ENCODE measurements at regions of chr17 and their contacts with region 1.

Region 1: GRCh38 chr17:42067351-42068091 is 17.1 kb upstream of the C17orf113 start:
- DNase-seq: peak; percentile 73
- CTCF ChIP-seq: peak; percentile 93

Region 2: DNA sequence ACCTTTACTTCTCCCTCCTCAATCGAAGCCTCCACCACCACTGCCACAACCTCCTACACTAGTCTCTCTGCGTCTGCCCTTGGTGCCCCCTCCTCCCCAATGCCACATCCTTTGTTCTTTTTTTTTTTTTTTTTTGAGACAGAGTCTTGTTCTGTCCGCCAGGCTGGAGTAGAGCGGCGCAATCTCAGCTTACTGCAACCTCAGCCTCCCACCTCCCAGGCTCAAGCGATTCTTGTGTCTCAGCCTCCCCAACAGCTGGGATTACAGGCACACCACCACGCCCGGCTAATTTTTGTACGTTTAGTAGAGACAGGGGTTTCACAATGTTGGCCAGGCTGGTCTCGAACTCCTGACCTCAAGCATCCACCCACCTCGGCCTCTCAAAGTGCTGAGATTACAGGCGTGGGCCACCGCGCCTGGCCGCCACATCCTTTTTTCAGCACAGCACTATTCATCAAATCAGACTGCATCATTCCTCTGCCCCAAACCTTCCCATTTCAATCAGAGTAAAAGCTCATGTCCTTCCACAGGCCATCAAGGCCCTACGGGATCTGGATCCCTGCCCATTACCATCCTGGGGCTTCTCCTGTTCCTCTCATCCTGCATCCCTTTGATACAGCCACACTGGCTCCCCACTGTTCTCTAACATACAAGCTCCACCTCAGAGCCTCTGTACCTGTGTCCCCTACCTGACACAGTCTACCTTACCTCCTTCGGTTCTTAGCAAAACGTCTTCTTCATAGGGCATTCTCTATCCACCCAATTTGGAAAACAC is 204.3 kb before region 1 on chr17:
- CTCF ChIA-PET with region 1: no interaction called
- POLR2A ChIA-PET with region 1: no interaction called
- DNase-seq: no peak
- CTCF ChIP-seq: no peak

Region 3: GRCh38 chr17:42019509-42020404 is 47.8 kb before region 1 on chr17 and contains the start of gene NKIRAS2:
- CTCF ChIA-PET with region 1: interaction called, 44 read pairs
- POLR2A ChIA-PET with region 1: no interaction called
- DNase-seq: peak; percentile 94
- CTCF ChIP-seq: peak; percentile 96

Region 4: GRCh38 chr17:42039794-42040763 is 27.4 kb before region 1 on chr17:
- CTCF ChIA-PET with region 1: interaction called, 16 read pairs
- POLR2A ChIA-PET with region 1: no interaction called
- DNase-seq: no peak
- CTCF ChIP-seq: no peak

Region 5: DNA sequence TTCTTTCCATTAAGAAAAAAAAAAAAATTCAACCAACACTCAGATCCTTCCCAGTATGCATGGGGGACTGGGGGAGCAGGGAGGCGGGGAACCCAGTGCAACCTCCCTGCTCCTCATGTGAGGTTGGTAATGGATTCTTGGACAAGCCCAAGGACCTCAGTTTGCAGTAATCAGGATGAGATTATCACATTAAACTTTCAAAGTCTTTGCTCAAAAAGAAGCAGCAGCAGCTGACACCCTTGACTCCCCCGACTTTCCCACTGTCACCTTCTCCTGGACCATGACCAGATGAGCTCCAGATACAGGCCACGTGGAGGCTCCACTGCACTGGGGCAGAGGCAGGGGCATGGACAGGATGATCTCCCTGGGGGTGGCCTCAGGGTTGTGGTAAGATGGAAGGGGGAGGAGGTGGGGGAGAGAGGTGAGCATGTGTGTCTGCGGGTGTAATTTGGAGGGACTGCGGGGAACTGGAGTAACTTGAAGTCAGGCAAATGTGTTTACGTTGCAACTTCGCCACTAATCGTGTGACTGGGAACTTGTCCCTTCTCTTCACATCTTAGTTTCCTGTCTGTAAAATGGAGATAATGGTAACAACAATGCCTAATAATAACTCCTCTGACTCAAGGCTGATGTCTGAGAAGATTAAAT is 11.0 kb after region 1 on chr17:
- CTCF ChIA-PET with region 1: interaction called, 19 read pairs
- POLR2A ChIA-PET with region 1: no interaction called
- DNase-seq: no peak
- CTCF ChIP-seq: no peak

Region 6: DNA sequence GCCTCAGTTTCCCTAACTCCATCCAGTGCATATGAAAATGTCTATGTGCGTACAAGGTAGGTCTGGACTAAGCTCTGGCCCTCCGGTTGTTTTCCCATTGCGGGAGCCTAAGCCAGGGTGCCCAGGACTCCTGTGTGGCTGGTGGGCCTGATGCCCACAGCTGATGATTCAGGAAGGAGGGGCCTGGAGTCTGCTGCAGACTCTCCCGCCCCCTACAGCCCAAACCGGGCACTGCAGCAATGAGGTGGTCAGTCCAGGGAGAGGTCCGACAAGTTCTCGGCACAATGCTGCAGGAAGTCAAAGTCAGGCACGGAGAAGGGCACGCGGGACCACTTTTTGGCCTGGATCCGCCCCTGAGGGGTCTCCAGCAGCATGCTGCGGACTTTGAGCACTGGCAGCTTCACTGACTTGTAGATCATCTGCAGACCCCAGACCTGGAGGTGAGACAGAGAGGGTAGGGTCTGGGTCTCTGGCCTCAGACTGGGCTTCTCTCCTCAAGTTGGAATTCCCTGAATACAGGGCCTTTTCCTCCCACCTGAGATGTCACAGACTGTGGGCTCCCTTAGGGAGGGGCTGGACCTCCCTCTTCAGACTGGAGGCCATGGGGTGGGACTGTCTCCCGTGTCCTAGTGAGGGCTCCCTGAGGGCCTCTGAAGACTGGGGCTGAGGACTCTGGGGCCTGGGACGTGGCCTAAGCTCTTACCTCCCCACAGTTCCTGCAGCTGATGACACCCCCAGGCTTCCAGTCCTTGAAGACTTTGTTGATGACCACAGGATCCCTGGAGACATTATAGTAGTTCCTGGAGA is 34.2 kb after region 1 on chr17:
- CTCF ChIA-PET with region 1: interaction called, 70 read pairs
- POLR2A ChIA-PET with region 1: no interaction called
- DNase-seq: peak; percentile 77
- CTCF ChIP-seq: peak; percentile 84

Region 7: GRCh38 chr17:42120770-42121769 is 53.5 kb after region 1 on chr17 and contains the start of gene KAT2A:
- CTCF ChIA-PET with region 1: interaction called, 34 read pairs
- POLR2A ChIA-PET with region 1: no interaction called
- DNase-seq: peak; percentile 94
- CTCF ChIP-seq: no peak

Region 8: GRCh38 chr17:42146911-42147607 is 79.5 kb after region 1 on chr17:
- CTCF ChIA-PET with region 1: no interaction called
- POLR2A ChIA-PET with region 1: no interaction called
- DNase-seq: no peak
- CTCF ChIP-seq: no peak

Measured in GM10248 (cell line).